Mammary epithelial cell (primary cell): ENCODE measurements at regions of chr7 and their contacts with region 1.

Region 1: DNA sequence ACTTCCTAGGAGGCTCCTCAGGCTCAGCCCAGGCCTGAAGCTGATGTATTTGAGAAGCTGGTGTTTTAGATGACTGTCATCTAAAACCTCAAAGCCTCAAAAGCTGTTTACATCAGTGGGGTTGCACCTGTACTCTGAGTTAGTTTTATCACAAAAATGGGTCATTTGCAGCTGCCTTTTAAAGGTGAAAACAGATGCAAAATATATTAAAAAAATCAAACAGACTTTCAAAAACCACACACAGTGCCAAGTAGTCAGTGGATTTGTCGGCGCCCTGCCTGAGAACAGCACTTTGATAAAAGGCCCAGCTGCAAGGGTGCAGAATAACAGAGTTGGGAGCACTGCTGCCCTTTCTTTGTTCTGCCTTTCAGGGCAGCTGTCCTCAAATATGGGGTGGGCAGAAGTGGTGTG is 103.0 kb downstream of the VOPP1 start:
- DNase-seq: no peak
- H3K4me3 ChIP-seq: no peak overlapping the region
- H3K27ac ChIP-seq: no peak overlapping the region
- H3K4me1 ChIP-seq: no peaks in the 10 kb centered on the region
- H3K27me3 ChIP-seq: no peaks in the 10 kb centered on the region
- CTCF ChIP-seq: no peak

Region 2: DNA sequence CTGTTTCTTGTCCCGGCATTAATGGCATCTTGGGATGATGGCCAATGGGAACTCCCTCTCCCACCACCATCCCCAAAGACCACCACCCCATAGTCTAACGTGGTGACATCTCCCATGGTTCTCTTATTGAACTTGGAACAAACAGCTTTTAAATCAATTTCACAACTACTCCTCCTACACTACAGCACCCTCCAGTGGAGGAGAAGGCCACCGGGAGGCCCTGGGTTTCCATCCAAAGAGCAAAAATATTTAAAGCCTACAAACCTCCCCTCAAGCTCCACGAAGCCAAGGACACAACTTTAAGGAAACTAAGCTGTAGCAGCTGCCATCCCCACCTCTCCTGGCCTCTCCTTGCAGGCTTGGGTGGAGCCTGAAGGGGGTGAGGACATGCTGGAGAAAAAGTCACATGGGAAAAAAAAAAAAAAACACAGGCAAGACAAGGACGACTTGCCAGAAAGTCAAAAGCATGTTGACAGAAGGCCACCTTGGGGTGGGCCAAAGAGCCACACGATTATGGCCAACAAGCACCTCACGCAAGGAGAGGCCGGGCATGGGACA is 198.1 kb before region 1 on chr7:
- CTCF ChIA-PET with region 1: no interaction called
- dilution Hi-C with region 1: no loop called
- in situ Hi-C with region 1: no loop called
- intact Hi-C with region 1: no loop called
- DNase-seq: no peak
- H3K4me3 ChIP-seq: no peak overlapping the region
- H3K27ac ChIP-seq: no peak overlapping the region
- H3K4me1 ChIP-seq: no peaks in the 10 kb centered on the region
- H3K27me3 ChIP-seq: no peaks in the 10 kb centered on the region
- CTCF ChIP-seq: peak; percentile 12 to 43

Region 3: GRCh38 chr7:55288070-55288824 is 181.0 kb before region 1 on chr7:
- CTCF ChIA-PET with region 1: no interaction called
- dilution Hi-C with region 1: no loop called
- in situ Hi-C with region 1: no loop called
- intact Hi-C with region 1: no loop called
- DNase-seq: no peak
- H3K4me3 ChIP-seq: no peak overlapping the region
- H3K27ac ChIP-seq: no peak overlapping the region
- H3K4me1 ChIP-seq: no peaks in the 10 kb centered on the region
- H3K27me3 ChIP-seq: peaks cover 12% of the 10 kb centered on the region
- CTCF ChIP-seq: peak in 1 of 2 donors; percentile 18

Region 4: DNA sequence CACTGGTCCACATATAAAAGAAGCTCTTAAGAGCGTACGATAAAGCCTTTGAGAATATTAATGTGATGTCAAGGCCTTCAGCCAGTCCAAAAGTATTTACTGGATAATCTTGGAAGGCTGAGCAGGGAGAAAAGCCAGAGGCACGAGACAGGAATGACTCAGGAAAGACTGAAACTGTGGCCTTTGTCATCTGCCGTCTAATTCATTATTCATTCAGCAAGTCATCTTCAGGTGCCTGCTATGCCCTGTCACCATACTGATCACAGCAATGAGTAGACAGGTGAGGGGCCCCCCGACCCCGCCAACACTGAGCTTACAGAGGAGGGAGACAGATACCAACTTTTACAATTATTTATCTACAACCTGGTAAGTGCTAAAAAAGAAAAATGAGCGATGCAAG is 24.1 kb after region 1 on chr7:
- CTCF ChIA-PET with region 1: no interaction called
- dilution Hi-C with region 1: no loop called
- in situ Hi-C with region 1: no loop called
- intact Hi-C with region 1: no loop called
- DNase-seq: peak; percentile 74
- H3K4me3 ChIP-seq: no peak overlapping the region
- H3K27ac ChIP-seq: no peak overlapping the region
- H3K4me1 ChIP-seq: no peaks in the 10 kb centered on the region
- H3K27me3 ChIP-seq: no peaks in the 10 kb centered on the region
- CTCF ChIP-seq: no peak

Region 5: GRCh38 chr7:55514546-55515256 is 45.4 kb after region 1 on chr7:
- CTCF ChIA-PET with region 1: no interaction called
- dilution Hi-C with region 1: loop called (anchors 5 kb)
- in situ Hi-C with region 1: no loop called
- intact Hi-C with region 1: no loop called
- DNase-seq: no peak
- H3K4me3 ChIP-seq: no peak overlapping the region
- H3K27ac ChIP-seq: no peak overlapping the region
- H3K4me1 ChIP-seq: no peaks in the 10 kb centered on the region
- H3K27me3 ChIP-seq: no peaks in the 10 kb centered on the region
- CTCF ChIP-seq: no peak

Region 6: DNA sequence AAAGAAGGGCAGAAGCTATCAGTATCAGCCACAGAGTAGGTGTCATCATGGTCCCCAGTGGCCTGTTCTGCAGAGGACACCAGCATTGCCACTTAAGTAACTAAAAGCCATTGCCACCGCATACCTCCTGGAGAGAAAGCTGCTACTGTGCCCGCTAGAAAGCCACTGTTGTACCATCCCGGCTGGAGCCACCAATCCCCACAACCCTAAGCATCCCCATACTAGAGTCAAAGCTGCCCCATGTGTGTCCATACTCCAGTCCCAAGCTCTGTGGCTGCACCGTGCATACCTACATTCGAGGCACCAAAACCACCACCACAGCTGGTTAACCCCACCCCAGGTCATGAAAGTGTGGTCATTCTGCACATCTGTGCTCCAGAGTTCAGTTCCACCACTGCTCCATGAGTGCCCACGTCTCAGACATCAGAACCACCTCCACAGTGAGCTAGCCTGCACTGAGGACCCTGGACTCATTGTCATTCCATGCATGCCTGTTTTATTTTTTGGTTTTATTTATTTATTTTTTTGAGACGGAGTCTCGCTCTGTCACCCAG is 402.7 kb after region 1 on chr7:
- CTCF ChIA-PET with region 1: no interaction called
- dilution Hi-C with region 1: no loop called
- in situ Hi-C with region 1: no loop called
- intact Hi-C with region 1: no loop called
- DNase-seq: no peak
- H3K4me3 ChIP-seq: no peak overlapping the region
- H3K27ac ChIP-seq: no peak overlapping the region
- H3K4me1 ChIP-seq: no peaks in the 10 kb centered on the region
- H3K27me3 ChIP-seq: no peaks in the 10 kb centered on the region
- CTCF ChIP-seq: no peak